ENCODE measurements at regions of chr19 and their contacts with region 1.

Region 1: GRCh38 chr19:48321622-48322591 is 3.4 kb upstream of the EMP3 start:
- DNase-seq: peak; percentile 100
- H3K4me3 Mint-ChIP-seq: peak overlapping the region; percentile 89
- H3K27ac Mint-ChIP-seq: peak overlapping the region; percentile 98
- H3K4me1 Mint-ChIP-seq: peaks cover 40% of the 10 kb centered on the region
- H3K27me3 Mint-ChIP-seq: no peaks in the 10 kb centered on the region

Region 2: DNA sequence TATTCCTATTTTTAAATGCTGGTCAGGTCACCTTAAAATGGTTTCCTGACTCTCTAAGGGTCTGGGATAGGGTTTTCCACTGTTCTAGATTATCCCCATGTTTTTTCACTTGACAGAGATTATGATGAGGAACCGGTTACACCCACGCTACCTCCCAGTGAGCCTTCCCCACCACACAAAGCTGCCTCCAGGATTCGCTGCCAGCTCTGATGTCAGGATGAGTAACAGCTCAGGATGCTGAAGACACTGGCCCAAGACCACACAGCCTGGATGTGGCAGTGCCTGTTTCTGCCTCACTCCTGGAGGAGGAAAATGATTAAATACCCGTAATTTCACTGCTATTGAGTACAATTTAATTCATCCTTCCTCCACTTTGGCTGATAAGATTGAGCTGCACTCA is 29.1 kb before region 1 on chr19:
- intact Hi-C with region 1: no loop called
- DNase-seq: no peak
- H3K4me3 Mint-ChIP-seq: no peak overlapping the region
- H3K27ac Mint-ChIP-seq: no peak overlapping the region
- H3K4me1 Mint-ChIP-seq: peaks cover 3% of the 10 kb centered on the region
- H3K27me3 Mint-ChIP-seq: no peaks in the 10 kb centered on the region

Region 3: GRCh38 chr19:48333467-48334384 is 11.8 kb after region 1 on chr19:
- intact Hi-C with region 1: loop called (anchors 1 kb)
- DNase-seq: peak; percentile 92
- H3K4me3 Mint-ChIP-seq: peak overlapping the region; percentile 86
- H3K27ac Mint-ChIP-seq: peak overlapping the region; percentile 89
- H3K4me1 Mint-ChIP-seq: peaks cover 47% of the 10 kb centered on the region
- H3K27me3 Mint-ChIP-seq: no peaks in the 10 kb centered on the region

Region 4: GRCh38 chr19:48391107-48391986 is 69.4 kb after region 1 on chr19 and contains the start of gene KDELR1:
- intact Hi-C with region 1: no loop called
- DNase-seq: peak; percentile 69
- H3K4me3 Mint-ChIP-seq: peak within 1 kb of the TSS; percentile 99
- H3K27ac Mint-ChIP-seq: peak within 1 kb of the TSS; percentile 97
- H3K4me1 Mint-ChIP-seq: peaks cover 16% of the 10 kb centered on the region
- H3K27me3 Mint-ChIP-seq: peaks cover 35% of the 10 kb centered on the region
- total RNA-seq, gene KDELR1: 80.2 and 87.8 TPM in 2 replicates

Region 5: DNA sequence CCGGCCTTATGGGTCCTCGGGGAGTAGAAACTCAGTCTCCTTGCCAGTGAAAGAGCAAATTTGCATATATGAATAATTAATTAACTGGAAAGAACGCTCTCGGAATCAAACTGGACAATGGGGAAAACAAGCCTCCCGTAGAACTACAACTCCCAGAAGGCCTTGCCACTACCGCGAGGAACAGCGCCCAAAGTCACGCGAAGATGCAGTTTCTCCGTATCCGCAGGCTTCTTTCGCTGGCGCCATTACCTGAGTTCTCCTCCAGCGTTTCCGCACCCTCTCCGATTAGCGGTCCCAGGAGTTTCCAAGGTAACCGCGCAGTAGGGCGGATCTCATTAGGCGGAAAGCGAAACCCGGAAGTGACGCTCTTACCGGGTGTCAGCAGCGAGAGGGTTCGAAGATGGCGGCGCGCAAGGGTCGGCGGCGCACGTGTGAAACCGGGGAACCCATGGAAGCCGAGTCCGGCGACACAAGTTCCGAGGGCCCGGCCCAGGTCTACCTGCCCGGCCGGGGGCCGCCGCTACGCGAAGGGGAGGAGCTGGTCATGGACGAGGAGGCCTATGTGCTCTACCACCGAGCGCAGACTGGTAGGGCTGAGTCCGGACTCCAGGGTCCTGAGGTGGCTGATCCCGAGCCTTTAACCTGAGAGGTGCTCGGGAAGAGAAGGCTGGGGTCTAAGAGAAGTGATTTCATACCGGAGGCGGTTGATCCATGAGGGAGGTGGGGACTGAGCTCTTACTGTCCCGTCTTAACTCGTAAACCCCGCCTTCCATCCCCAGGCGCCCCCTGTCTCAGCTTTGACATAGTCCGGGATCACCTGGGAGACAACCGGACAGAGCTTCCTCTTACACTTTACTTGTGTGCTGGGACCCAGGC is 123.9 kb after region 1 on chr19 and contains the start of gene GRWD1:
- intact Hi-C with region 1: loop called (anchors 2 kb)
- DNase-seq: peak; percentile 95
- H3K4me3 Mint-ChIP-seq: peak within 1 kb of the TSS; percentile 93
- H3K27ac Mint-ChIP-seq: peak within 1 kb of the TSS; percentile 86
- H3K4me1 Mint-ChIP-seq: peaks cover 26% of the 10 kb centered on the region
- H3K27me3 Mint-ChIP-seq: peaks cover 21% of the 10 kb centered on the region
- total RNA-seq, gene GRWD1: 77.6 and 77.8 TPM in 2 replicates

Region 6: GRCh38 chr19:48637170-48637947 is 315.5 kb after region 1 on chr19 and contains the start of gene DBP:
- intact Hi-C with region 1: loop called (anchors 10 kb)
- DNase-seq: peak; percentile 99
- H3K4me3 Mint-ChIP-seq: peak within 1 kb of the TSS; percentile 83
- H3K27ac Mint-ChIP-seq: peak within 1 kb of the TSS; percentile 98
- H3K4me1 Mint-ChIP-seq: peaks cover 33% of the 10 kb centered on the region
- H3K27me3 Mint-ChIP-seq: peaks cover 4% of the 10 kb centered on the region
- total RNA-seq, gene DBP: 7.3 and 7.9 TPM in 2 replicates